Prostate gland (tissue), 2 donors: ENCODE measurements at regions of chr10 and their contacts with region 1.

Region 1: DNA sequence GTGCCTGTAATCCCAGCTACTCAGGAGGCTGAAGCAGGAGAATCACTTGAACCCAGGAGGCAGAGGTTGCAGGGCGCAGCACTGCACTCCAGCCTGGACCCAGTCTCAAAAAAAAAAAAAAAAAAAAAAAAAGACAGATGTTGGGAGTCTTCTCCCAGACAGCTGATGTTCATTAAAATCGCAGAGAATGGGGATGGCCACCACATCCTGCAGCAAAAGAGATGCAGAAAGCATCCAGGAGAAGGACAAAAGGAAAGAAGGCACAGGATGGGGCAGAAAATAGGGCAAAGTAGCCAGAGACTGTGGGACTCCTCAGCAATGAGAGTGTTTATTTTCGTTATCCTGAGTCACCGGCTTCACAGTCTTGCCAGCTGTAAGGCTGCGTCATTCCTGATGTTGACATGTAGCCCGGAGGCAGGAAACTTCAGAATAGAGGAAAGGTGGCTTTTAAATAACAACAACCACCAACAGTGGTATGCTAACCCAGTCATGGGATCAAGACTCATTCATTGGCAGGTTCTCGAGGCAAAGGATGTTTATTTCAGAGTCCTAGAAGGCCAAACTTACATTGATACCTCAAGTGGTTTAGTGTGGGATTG is 149.5 kb upstream of the SVIL start:
- DNase-seq: peak; percentile 86
- H3K4me3 ChIP-seq: no peak overlapping the region
- H3K27ac ChIP-seq: peak overlapping the region; percentile 67 to 68
- H3K4me1 ChIP-seq: no peaks in the 10 kb centered on the region
- H3K27me3 ChIP-seq: no peaks in the 10 kb centered on the region
- CTCF ChIP-seq: no peak
- POLR2A ChIP-seq: peak; percentile 16

Region 2: DNA sequence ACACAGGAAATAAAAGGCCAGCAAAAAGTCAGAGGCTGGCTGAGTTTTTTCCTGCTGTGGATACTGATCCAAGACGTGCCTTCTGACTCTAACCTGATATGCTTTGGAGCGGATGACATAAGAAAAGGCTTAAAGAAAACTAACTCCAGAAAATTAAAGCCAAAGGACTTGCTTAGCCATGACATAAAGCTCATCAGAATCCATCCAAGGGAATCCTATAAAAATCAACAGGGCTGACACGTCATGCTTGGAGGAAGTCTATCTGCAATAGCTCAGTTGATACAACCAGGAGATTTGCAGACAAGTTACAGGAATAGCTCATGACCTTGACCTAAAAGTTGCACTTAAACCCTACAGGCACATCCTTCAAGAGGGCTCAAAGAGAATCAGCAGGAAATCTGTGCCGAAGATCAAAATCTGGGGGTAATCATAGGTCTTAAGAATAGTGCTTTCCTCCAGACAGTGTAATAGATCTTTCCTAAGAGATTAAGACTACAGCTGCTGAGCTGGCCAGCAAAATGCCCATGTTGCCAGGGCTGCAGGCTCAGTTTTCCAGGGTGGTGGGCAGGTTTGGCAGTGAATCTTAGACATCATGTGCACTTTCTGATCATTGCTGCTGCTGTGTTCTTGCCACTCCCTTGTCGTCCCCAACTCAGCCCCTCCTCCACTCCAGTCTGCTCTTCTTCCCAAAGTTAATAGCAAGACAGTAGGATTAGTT is 38.0 kb before region 1 on chr10:
- intact Hi-C with region 1: loop called (anchors 5 kb)
- DNase-seq: no peak
- H3K4me3 ChIP-seq: no peak overlapping the region
- H3K27ac ChIP-seq: no peak overlapping the region
- H3K4me1 ChIP-seq: no peaks in the 10 kb centered on the region
- H3K27me3 ChIP-seq: no peaks in the 10 kb centered on the region
- CTCF ChIP-seq: no peak
- POLR2A ChIP-seq: no peak